Activated T-helper 2 cell treated with anti-CD3 and anti-CD28 coated beads, Interferon-gamma antibody, Interleukin-2, Interleukin-4, amounts not matched to agents 10 μg/mL and 5 μg/mL and 100 μg/mL, durations not matched to agents 14 hours and 24 hours and 36 hours (primary cell): ENCODE measurements at regions of chr10 and their contacts with region 1.

Region 1: DNA sequence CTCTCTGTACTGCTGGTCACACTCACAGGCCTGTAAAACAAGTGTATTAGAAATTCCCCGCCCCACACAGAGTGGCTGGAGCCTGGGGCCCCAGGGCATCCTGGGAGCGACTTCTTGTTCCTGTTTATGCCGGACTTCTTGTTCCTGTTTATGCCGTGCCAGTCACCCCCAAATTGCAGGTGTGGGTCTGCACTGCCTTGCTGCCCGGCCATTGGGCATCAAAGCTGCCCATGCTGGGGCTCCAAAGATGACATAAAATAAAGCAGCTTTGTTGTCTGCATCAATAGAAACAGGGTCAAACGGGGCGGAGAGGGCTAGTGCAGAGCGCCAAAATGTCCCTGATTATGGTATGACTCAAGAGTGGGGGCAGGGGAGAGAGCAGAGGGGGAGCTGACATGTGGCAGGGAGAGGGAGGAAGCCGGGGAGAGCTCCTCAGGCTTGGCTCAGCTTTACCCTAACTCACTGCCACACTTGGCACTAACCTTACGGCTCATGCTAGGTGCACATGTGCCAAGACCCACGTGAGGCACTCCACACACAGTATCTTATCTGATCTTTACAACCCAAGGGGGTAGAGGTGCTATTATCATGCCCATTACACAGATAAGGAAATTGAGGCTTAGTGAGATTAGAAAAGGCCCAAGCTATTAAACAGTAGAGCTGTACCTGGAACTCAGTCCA is 98.4 kb downstream of the PIP4K2A start:
- DNase-seq: no peak
- H3K4me3 Mint-ChIP-seq: peak overlapping the region; percentile 23
- H3K27ac Mint-ChIP-seq: peak overlapping the region; percentile 45
- H3K4me1 Mint-ChIP-seq: peaks cover 83% of the 10 kb centered on the region
- H3K27me3 Mint-ChIP-seq: no peaks in the 10 kb centered on the region

Region 2: GRCh38 chr10:22599048-22599561 is 16.9 kb before region 1 on chr10:
- intact Hi-C with region 1: loop called (anchors 2 kb)
- DNase-seq: no peak
- H3K4me3 Mint-ChIP-seq: no peak overlapping the region
- H3K27ac Mint-ChIP-seq: peak overlapping the region; percentile 47
- H3K4me1 Mint-ChIP-seq: peaks cover 49% of the 10 kb centered on the region
- H3K27me3 Mint-ChIP-seq: no peaks in the 10 kb centered on the region

Region 3: DNA sequence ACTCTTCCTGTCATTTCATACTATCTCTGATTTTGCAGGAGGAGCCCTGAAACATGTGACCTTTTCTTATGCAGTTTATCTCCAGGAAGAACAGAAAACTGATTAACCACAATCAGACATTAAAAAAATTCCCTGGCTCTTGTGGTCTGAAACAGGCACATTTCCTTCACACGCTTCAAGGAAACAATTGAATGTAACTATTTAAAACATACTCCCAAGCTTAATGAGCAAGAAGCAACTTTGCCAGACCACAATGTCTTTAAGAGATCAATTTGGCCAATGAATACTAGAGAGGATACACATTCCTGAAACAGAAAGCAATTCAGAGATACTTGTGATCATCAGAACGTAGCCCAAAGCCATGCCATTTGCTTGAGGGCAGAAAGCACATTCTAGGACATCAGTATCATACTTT is 32.6 kb after region 1 on chr10:
- intact Hi-C with region 1: loop called (anchors 5 kb)
- DNase-seq: no peak
- H3K4me3 Mint-ChIP-seq: no peak overlapping the region
- H3K27ac Mint-ChIP-seq: peak overlapping the region; percentile 98
- H3K4me1 Mint-ChIP-seq: peaks cover 86% of the 10 kb centered on the region
- H3K27me3 Mint-ChIP-seq: no peaks in the 10 kb centered on the region

Region 4: GRCh38 chr10:22666287-22667092 is 50.5 kb after region 1 on chr10:
- intact Hi-C with region 1: no loop called
- DNase-seq: peak; percentile 51
- H3K4me3 Mint-ChIP-seq: peak overlapping the region; percentile 74
- H3K27ac Mint-ChIP-seq: peak overlapping the region; percentile 82
- H3K4me1 Mint-ChIP-seq: peaks cover 56% of the 10 kb centered on the region
- H3K27me3 Mint-ChIP-seq: no peaks in the 10 kb centered on the region

Region 5: GRCh38 chr10:22737587-22737986 is 121.6 kb after region 1 on chr10:
- intact Hi-C with region 1: no loop called
- DNase-seq: no peak
- H3K4me3 Mint-ChIP-seq: no peak overlapping the region
- H3K27ac Mint-ChIP-seq: no peak overlapping the region
- H3K4me1 Mint-ChIP-seq: no peaks in the 10 kb centered on the region
- H3K27me3 Mint-ChIP-seq: peaks cover 12% of the 10 kb centered on the region